H1 (cell line): ENCODE measurements at regions of chr3 and their contacts with region 1.

Region 1: GRCh38 chr3:8336456-8336855 is 165.2 kb upstream of the LMCD1 start:
- DNase-seq: peak in 1 of 2 experiments; percentile 68
- H3K4me3 ChIP-seq: no peak overlapping the region
- H3K27ac ChIP-seq: no peak overlapping the region
- H3K4me1 ChIP-seq: peaks cover 0 to 4% (median 0%) of the 10 kb centered on the region in 4 experiments; a peak in 1 of 7 replicates
- H3K27me3 ChIP-seq: no peaks in the 10 kb centered on the region
- CTCF ChIP-seq: peak; percentile 56 to 83 (median 68)
- EP300 ChIP-seq: no peak
- POLR2A ChIP-seq: no peak
- RAD21 ChIP-seq: peak; percentile 48 to 56

Region 2: DNA sequence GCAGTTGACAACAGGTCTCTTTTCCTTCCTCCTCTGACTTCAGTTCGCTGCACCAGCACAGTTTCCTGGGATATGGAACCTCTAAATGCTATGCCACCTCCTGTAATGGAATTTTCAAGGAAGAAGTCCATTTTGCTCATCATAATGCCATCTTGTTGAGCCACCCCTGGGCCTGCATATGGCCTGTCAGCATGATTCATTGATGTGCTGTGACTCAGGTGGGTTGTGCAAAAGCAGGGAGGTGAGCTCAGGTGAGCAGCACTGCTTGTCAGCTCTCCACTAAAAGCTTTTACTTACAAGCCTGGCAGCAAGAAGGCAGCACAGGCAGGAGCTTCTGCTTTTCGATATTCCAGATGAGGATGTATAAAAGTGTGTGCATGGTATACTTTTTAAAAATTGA is 82.0 kb before region 1 on chr3:
- CTCF ChIA-PET with region 1: no interaction called
- POLR2A ChIA-PET with region 1: no interaction called
- DNase-seq: no peak
- H3K4me3 ChIP-seq: no peak overlapping the region
- H3K27ac ChIP-seq: no peak overlapping the region
- H3K4me1 ChIP-seq: no peaks in the 10 kb centered on the region
- H3K27me3 ChIP-seq: no peaks in the 10 kb centered on the region
- CTCF ChIP-seq: no peak
- EP300 ChIP-seq: no peak
- POLR2A ChIP-seq: no peak
- RAD21 ChIP-seq: no peak

Region 3: DNA sequence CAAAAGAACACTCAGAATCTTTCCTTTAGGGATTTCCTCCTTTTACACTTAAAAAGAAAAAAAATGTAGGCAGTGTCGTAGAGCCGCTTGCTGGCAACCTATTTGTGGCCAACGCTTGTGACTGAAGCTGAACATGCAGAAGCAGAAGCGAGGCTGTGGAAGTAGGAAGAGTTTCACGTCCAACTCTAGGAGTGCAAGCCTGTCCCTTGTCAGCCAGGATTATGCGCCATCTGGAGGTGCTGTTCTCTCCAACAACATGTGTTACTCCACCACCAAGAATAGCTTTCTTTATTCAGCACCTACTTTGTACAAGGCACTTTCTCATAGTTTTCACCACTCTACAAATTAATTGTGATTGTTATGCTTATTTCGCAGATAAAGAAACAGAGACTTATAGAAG is 58.0 kb before region 1 on chr3:
- CTCF ChIA-PET with region 1: no interaction called
- POLR2A ChIA-PET with region 1: no interaction called
- DNase-seq: no peak
- H3K4me3 ChIP-seq: no peak overlapping the region
- H3K27ac ChIP-seq: no peak overlapping the region
- H3K4me1 ChIP-seq: peaks cover 4 to 9% (median 7%) of the 10 kb centered on the region in 4 experiments
- H3K27me3 ChIP-seq: peaks cover 0 to 1% (median 0%) of the 10 kb centered on the region in 4 experiments; a peak in 1 of 7 replicates
- CTCF ChIP-seq: peak in 2 of 3 experiments; percentile 17 to 30; a peak in 2 of 4 replicates
- EP300 ChIP-seq: no peak
- POLR2A ChIP-seq: no peak
- RAD21 ChIP-seq: no peak; a peak in 1 of 4 replicates

Region 4: DNA sequence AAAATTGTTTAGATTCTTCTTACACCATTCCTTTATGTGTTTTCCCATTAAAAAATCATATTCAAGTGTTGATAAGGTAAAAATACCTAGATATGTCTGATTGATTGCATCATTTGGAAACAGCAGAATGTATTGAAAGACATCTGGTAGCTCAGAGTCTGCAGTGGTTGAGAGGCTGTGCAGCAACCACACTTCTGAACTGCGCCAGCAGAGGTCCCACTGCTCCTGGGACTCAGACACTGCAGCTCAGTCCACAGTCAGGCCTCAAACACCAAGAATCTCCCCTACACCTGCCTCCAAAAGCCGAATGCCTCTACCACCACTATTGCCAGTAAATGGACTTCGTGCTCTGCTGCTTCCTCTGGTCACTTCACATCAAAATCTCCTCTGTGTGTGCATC is 11.7 kb before region 1 on chr3:
- CTCF ChIA-PET with region 1: interaction called, 11 read pairs
- POLR2A ChIA-PET with region 1: no interaction called
- DNase-seq: peak in 1 of 2 experiments; percentile 68
- H3K4me3 ChIP-seq: no peak overlapping the region
- H3K27ac ChIP-seq: no peak overlapping the region
- H3K4me1 ChIP-seq: peaks cover 6 to 11% (median 7%) of the 10 kb centered on the region in 4 experiments; a peak in 6 of 7 replicates
- H3K27me3 ChIP-seq: no peaks in the 10 kb centered on the region
- CTCF ChIP-seq: peak; percentile 67 to 85 (median 78)
- EP300 ChIP-seq: no peak
- POLR2A ChIP-seq: no peak
- RAD21 ChIP-seq: peak; percentile 76

Region 5: DNA sequence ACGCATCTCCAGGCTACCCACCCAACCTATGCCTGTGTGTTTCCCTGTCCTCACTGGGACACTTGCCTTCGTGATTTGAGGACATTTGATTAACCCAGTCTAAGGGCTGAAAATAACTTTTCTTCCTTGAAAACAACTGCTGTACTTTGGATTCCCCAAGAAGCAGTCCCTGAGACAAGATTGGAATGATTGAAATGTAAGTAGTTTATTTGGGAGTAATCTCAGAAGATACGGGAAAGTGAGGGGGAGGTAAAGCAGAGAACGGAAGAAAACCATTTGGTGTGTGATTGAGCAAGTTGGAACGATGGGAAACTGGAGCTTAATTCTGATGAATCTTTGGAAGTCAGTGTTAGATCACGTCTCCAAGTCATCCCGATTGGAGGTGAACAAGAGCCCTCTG is 21.4 kb after region 1 on chr3:
- CTCF ChIA-PET with region 1: no interaction called
- POLR2A ChIA-PET with region 1: no interaction called
- DNase-seq: no peak
- H3K4me3 ChIP-seq: no peak overlapping the region
- H3K27ac ChIP-seq: no peak overlapping the region
- H3K4me1 ChIP-seq: peaks cover 0 to 3% (median 0%) of the 10 kb centered on the region in 4 experiments; a peak in 2 of 7 replicates
- H3K27me3 ChIP-seq: no peaks in the 10 kb centered on the region
- CTCF ChIP-seq: no peak
- EP300 ChIP-seq: no peak
- POLR2A ChIP-seq: no peak
- RAD21 ChIP-seq: no peak

Region 6: DNA sequence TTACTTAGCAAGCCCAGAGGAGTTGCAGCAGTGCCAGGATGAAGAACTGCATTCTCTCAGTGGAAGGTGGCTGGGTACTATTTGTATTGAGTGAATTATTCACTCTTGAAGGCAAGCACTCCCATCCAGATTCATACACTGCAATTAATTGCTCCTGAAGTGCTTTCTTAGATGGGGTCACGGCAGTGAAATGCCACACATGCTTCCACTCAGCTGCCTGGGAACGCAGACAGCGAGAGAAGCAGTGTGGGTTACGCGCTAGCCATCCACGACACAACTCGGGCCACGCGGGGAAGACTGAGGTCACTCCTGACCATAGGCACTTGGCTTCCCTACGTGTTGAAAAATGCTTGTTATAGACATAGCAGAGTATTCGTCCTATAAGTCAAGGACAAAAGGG is 134.3 kb after region 1 on chr3:
- CTCF ChIA-PET with region 1: no interaction called
- POLR2A ChIA-PET with region 1: no interaction called
- DNase-seq: no peak
- H3K4me3 ChIP-seq: no peak overlapping the region
- H3K27ac ChIP-seq: no peak overlapping the region
- H3K4me1 ChIP-seq: peaks cover 0 to 4% (median 2%) of the 10 kb centered on the region in 4 experiments; a peak in 2 of 7 replicates
- H3K27me3 ChIP-seq: no peaks in the 10 kb centered on the region
- CTCF ChIP-seq: no peak
- EP300 ChIP-seq: no peak
- POLR2A ChIP-seq: no peak
- RAD21 ChIP-seq: no peak